ENCODE measurements at regions of chr16 and their contacts with region 1.

Region 1: GRCh38 chr16:72389791-72390190 is 217.8 kb upstream of the PMFBP1 start:
- DNase-seq: no peak
- H3K4me3 ChIP-seq: no peak overlapping the region
- H3K27me3 ChIP-seq: no peaks in the 10 kb centered on the region
- CTCF ChIP-seq: no peak

Region 2: DNA sequence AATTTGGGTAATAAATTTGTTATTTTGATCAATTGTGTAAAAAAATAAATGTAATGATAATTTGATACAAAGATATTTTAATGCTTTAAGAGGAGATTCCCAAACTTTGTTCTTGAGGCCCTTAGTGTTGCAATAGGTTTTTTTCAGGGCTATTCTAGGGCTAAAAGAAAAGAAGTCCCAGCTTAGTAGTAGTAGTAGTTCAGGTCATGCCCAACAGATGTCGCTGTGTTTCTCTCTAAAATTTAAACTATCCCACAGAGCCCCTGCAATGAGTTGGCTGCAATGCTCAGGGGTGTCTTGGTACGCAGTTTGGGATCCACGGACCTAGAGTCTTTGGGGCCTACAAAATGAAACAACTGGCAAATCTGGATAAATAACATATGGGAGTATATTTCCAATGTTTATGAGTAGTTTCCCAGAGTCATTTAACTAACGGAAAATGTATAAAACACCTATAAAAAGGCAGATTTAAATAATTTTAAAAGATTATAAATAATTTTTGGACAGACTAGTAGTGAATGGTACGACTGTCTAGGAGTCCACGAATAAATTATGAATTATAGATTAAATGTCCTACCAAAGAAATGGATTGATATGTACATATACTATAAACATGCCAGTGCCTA is 10.6 kb after region 1 on chr16:
- CTCF ChIA-PET with region 1: interaction called, 34 read pairs
- POLR2A ChIA-PET with region 1: no interaction called
- DNase-seq: peak; percentile 15
- H3K4me3 ChIP-seq: no peak overlapping the region
- H3K27me3 ChIP-seq: no peaks in the 10 kb centered on the region
- CTCF ChIP-seq: peak; percentile 79

Region 3: GRCh38 chr16:72467157-72467759 is 77.5 kb after region 1 on chr16:
- CTCF ChIA-PET with region 1: no interaction called
- POLR2A ChIA-PET with region 1: no interaction called
- DNase-seq: no peak
- H3K4me3 ChIP-seq: no peak overlapping the region
- H3K27me3 ChIP-seq: no peaks in the 10 kb centered on the region
- CTCF ChIP-seq: peak; percentile 77